ENCODE measurements at regions of chr21 and their contacts with region 1.

Region 1: DNA sequence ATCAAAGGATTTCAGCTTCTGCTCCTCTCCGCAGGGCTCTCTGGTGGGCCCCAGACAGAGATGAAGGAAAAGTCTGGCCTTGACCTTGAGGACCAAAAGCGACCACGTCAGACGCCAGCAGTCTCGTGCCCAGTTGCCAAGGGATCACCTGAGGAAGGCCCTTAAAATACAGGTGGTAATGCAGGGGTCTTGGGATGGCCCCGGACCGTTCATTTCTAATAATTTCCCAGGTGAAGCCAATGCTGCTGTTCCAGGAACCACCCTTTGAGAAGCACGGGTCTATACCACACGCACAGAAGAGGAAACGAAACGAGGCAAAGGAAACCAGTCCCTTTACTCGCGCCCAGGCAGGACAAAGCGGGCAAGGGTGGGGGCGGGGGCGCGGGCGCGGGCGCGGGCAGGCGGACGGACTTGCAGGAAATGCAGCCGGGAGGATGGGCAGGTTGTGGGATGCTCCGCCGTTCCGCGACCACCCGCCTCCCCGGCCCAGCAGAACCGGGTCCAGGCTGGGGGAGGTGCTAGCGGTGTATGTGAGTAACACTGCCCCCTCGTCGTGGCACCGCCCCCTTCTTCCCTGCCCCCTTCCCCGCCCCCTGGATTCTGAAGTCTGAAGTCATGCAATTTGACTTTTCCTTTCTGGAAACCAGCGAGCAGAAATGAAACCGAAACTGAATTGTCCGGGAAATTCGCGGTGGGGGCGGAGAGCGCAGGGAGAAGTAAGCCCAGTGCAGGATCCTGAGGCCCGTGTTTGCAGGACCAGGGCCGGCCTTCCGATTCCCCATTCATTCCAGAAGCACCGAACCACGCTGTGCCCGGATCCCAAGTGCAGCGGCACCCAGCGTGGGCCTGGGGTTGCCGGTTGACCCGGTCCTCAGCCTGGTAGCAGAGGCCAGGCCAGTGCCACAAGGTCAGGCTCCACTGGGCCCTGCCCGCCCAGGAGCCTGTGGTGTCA is 5.9 kb upstream of the MX1 start:
- DNase-seq: peak; percentile 92
- H3K4me3 ChIP-seq: peak overlapping the region; percentile 62 to 69 (median 67)
- H3K27ac ChIP-seq: peak overlapping the region; percentile 84 to 90 (median 86)
- H3K4me1 ChIP-seq: peaks cover 0 to 12% (median 8%) of the 10 kb centered on the region in 4 donors
- H3K27me3 ChIP-seq: no peaks in the 10 kb centered on the region
- CTCF ChIP-seq: no peak
- EP300 ChIP-seq: no peak
- POLR2A ChIP-seq: no peak

Region 2: DNA sequence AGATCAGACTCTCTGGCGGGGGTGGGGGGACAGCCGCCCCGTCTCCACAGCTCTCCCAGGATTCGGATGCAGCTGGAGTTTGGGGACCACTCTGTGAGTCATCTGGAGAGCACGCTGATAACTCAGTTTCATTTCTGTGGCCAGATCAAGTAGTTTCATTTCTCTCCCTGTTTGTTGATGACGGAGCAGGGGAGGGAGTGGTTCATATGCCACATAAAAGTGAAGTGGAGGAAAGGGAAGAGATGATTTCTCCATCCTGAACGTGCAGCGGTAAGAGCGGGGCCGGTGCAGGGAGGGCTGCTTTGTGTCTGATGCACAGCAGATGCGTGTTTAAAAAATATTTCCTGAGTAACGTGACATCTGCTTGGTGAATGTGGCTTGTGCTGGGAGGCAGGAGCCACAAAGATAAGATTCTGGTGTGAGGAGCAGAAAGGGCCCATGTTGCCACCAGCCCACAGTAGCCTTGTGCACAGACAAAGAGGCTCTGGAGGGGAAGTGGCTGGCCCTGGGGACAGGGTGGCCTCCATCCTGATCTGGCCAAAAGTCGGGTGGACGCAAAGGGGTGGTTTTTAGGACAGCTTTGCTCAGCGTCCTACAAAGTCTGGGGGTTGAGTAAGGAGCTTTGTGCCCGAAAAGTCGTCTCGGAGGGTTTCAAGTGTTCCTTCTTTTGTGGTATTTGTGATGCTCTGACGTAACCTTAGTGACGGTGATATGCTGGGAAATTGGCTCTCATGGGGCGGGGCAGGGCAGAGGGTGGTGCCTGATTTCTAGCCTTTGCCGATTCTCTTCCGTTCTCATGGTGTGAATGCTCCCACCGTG is 58.2 kb before region 1 on chr21 and contains the start of gene MX2:
- intact Hi-C with region 1: loop called (anchors 10 kb)
- DNase-seq: peak; percentile 85
- H3K4me3 ChIP-seq: peak within 1 kb of the TSS; percentile 8 to 41 (median 34)
- H3K27ac ChIP-seq: peak within 1 kb of the TSS; percentile 70 to 80 (median 72)
- H3K4me1 ChIP-seq: peaks cover 0 to 22% (median 5%) of the 10 kb centered on the region in 4 donors
- H3K27me3 ChIP-seq: no peaks in the 10 kb centered on the region
- CTCF ChIP-seq: no peak
- EP300 ChIP-seq: peak in 1 of 4 donors; percentile 10
- POLR2A ChIP-seq: no peak
- total RNA-seq, gene MX2: 5.1 to 9.6 (median 7.3) TPM

Measured in sigmoid colon (tissue), 7 donors.